Motor neuron (in vitro differentiated cells): ENCODE measurements at regions of chr14 and their contacts with region 1.

Region 1: DNA sequence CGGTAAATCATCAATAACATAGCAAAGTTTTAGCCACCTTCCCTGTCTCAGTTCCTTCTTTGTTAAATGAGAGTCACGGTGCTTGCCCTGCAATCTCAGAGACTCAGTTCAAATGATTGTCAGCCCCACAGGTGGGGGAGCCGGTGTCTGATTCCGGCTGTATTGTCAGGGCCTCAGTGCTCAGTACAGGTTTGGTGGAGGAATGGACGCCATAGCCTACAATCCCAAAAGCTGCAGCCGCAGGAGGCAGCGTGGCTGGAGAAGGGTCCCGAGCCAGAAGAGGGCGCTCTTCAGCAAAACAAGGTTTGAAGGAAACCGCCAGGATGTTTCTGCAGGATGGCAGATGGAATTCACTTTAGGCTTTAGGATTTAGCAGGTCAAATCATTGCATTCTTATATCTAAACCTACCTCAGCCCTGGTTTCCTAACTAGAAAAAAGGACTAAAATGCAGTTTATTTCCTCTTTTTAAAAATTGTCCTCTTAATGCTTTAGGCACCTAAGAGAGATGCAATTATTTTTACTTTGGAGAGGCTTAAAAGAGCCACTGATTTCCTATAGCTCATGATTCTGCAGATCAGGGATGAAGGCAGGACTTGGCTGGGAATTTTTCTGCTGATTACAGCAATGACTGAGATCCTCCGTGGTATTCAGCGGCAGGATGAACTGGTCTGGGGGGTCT is 29.2 kb downstream of the FOS start:
- ATAC-seq: peak; percentile 22 to 69 (median 63)
- H3K4me3 ChIP-seq: no peak overlapping the region
- H3K27ac ChIP-seq: no peak overlapping the region
- H3K4me1 ChIP-seq: peaks cover 0 to 11% of the 10 kb centered on the region in 2 donors

Region 2: DNA sequence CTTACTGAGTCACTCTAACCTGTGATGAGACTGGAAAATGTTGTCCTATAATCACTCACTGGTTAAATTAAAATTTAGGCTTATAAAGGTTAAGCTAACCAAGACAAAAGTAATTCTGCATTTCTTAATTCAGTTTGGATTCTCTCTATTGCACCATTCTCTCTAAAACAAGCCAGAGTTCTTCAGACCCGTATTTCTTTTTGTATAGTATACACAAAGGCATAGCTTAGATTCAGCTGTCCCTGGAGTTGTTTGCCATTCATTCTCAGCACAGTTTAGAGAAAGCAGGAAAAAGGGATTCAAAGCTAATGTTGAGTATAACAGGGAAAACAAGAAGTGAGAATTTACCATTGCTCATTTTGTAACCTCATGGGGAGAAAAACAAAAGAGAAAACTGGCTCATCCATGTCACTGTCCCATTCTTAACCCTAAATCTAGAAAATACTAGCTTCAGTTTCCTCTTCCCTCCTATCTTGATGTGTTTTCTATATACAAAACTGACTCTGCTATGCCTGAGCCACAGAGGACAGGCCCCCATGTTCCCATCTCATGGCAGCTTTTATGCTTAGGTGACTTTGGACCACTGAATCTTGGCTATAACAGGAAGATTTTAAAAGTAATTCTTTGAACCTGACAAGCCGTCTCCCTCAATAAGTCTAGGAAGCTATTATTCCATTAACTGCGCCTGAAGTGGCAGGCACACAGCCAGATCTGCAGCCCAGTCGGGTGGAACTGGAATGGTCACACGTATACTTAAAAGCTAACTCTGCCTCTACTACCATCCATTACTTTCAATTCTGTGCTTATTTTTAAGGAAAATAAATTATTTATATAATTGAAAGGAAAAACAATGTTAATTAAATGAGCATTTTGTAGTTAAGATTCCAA is 602.0 kb before region 1 on chr14:
- in situ Hi-C with region 1: no loop called
- ATAC-seq: peak in 1 of 8 experiments; percentile 52
- H3K4me3 ChIP-seq: no peak overlapping the region
- H3K27ac ChIP-seq: no peak overlapping the region
- H3K4me1 ChIP-seq: peaks cover 0 to 4% of the 10 kb centered on the region in 2 donors

Region 3: DNA sequence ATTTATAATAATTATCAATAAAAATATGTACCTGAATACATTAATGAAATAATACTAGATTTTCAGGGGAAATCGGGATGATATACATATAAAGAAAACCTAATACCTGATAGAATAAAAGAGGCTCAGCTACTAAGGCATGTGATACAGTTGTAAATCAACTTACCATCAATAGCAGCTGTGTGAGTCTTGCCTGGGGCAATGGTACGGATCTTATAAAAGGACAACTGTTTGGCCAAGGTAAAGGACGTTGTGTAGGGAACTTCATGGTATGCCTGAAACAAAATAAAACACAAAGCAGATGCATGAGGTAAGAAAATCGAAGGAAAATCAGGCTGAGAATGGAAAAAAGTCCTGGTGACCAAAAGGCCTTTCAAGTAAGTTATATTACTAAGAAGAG is 206.3 kb before region 1 on chr14:
- in situ Hi-C with region 1: no loop called
- ATAC-seq: no peak
- H3K4me3 ChIP-seq: no peak overlapping the region
- H3K27ac ChIP-seq: no peak overlapping the region
- H3K4me1 ChIP-seq: no peaks in the 10 kb centered on the region

Region 4: DNA sequence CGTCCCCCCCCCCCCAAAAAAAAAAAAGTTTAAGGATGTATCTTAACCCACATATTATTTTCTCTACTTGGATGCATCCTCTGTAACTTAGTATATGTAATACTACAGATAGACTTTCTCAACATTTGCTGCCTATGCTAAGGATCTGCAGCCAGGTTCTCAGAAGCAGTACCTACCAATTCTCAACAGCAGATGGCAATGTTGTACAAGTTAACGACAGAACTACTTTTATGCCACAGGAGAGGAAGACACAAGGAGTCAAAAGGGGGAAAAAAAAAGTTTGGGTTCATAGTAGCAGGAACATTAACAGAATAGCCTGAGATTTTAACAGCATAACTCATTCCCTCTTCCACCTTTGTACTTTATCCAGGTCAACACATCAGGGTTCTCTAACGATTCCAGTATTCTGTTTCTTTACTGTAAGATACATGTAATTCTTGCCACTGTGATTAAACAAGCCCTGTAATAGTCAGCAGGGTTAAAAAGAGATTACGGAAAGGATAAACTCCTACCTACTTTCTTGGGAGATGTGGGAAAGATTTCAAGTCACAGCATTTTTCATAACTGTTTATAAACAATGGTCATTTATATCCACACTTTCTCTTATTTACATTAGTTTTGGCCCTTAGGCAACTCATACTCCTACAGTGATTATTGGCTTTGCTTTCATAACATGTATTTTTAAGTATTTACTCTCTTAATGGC is 175.3 kb before region 1 on chr14:
- in situ Hi-C with region 1: loop called in 4 of 9 experiments (anchors 5 to 10 kb)
- ATAC-seq: peak; percentile 61 to 89 (median 84)
- H3K4me3 ChIP-seq: no peak overlapping the region
- H3K27ac ChIP-seq: no peak overlapping the region
- H3K4me1 ChIP-seq: peaks cover under 1 to 5% of the 10 kb centered on the region in 2 donors

Region 5: DNA sequence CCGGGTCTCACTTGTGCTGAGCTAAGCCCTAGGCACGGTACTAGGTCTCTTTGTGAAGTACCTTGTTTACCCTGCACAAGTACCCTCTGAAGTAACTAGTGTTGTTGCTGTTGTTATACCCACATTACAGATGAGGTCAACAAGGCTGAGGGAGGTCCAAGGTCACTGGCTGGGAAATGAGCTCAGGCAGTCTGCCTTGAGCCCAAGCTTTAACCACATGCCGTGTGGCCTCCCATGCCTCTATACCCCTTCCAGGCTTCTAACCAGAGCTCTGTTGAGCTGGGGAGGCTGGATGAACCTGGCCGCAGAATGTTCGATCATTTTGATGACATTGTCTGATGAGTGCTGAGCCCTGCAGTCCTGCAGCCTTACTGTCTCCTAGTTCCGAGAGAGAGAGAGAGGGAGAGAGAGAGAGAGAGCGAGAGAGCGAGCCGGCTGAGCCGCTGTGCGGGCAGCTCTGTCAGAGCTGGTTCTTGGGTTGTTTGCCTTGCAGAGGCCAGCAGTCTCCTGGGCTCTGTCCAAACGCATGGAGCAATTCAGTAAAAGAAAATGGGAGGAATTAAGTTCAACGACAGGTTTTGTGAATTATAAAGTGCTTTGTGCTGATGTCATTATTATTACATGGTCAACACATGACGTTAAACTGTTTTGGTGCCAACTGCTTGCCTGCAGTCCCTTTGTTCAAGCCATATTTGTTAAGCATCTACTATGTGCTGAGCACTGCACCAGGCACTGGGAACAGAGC is 133.1 kb after region 1 on chr14:
- in situ Hi-C with region 1: loop called in 1 of 9 experiments (anchors 10 kb)
- ATAC-seq: peak in 4 of 8 experiments; percentile 13 to 89 (median 36)
- H3K4me3 ChIP-seq: no peak overlapping the region
- H3K27ac ChIP-seq: no peak overlapping the region
- H3K4me1 ChIP-seq: no peaks in the 10 kb centered on the region

Region 6: DNA sequence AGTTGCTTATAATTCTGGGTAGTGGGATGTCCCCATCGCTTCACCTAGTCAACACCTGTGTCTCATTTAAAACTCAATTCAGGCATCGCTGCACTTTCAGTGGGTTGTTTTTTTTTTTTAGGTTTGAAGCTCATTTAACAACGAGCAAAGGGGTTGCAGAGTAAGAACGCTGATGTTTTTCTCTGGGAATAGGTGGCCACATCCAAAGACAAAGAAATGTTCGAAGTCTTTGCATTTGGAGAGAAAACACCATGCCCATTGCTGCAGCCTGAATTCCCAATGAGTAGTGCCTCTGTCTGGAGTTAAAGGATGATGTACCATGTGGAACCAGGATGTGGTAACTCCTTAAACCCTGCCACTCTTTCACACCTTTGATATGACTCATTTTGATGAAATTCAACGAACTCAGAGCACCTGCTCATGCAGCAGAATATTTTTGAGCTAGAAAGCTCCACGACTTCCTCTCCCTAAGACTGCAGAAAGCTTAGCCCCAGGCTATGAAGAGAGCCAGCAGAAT is 179.4 kb after region 1 on chr14:
- in situ Hi-C with region 1: loop called in 8 of 9 experiments (anchors 10 to 25 kb)
- ATAC-seq: no peak
- H3K4me3 ChIP-seq: no peak overlapping the region
- H3K27ac ChIP-seq: no peak overlapping the region
- H3K4me1 ChIP-seq: no peaks in the 10 kb centered on the region